Natural killer cell (primary cell): ENCODE measurements at regions of chr2 and their contacts with region 1.

Region 1: DNA sequence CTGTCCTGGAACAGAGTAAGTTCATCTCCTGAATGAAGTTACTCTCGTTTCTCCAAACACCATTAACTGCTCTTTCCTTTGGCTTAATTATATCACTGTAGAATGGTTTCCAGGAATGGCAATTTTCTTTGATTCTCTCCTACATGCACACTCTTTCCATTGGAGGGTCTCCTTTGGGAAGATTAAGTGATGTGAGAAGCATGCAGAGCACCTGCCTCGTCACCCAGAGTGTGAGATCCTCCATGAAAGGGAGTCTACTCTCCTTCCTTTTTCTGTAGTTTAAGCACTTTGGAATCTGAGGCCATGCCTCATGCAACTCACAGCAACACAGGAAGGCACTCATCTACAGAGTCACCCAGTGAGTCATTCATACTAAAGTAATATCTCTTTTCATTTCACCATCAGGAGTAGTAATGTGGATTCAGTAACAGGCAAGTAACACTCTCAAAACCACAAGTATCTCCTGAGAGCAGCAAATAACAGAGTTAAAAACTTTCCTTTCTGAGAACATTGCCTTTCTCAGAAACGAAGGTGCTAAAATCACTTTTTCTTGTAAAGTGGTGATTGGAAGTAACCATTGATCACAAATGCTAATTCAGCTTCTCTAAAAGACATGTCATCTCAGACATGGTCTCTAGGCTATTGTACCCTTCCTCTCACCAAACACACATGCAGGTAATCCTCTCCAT is 52.8 kb upstream of the IL1RL1 start:
- DNase-seq: peak in 1 of 2 donors; percentile 36
- ATAC-seq: peak; percentile 66 to 73 (median 70)
- H3K4me3 ChIP-seq: no peak overlapping the region
- H3K4me3 Mint-ChIP-seq: peak overlapping the region; percentile 78
- H3K27ac ChIP-seq: peak overlapping the region; percentile 31
- H3K27ac Mint-ChIP-seq: peak overlapping the region; percentile 84 to 92
- H3K4me1 ChIP-seq: peaks cover 53% of the 10 kb centered on the region
- H3K4me1 Mint-ChIP-seq: peaks cover 37 to 46% of the 10 kb centered on the region in 2 donors
- H3K27me3 ChIP-seq: no peaks in the 10 kb centered on the region
- H3K27me3 Mint-ChIP-seq: no peaks in the 10 kb centered on the region
- CTCF ChIP-seq: no peak

Region 2: GRCh38 chr2:102294802-102295489 is 36.4 kb after region 1 on chr2:
- intact Hi-C with region 1: loop called (anchors 5 kb)
- DNase-seq: no peak
- ATAC-seq: peak in 1 of 3 donors; percentile 18
- H3K4me3 ChIP-seq: no peak overlapping the region
- H3K4me3 Mint-ChIP-seq: no peak overlapping the region
- H3K27ac ChIP-seq: no peak overlapping the region
- H3K27ac Mint-ChIP-seq: peak overlapping the region in 1 of 2 donors; percentile 44
- H3K4me1 ChIP-seq: peaks cover 9% of the 10 kb centered on the region
- H3K4me1 Mint-ChIP-seq: peaks cover 23 to 25% of the 10 kb centered on the region in 2 donors
- H3K27me3 ChIP-seq: no peaks in the 10 kb centered on the region
- H3K27me3 Mint-ChIP-seq: peaks cover 0 to 3% of the 10 kb centered on the region in 2 donors
- CTCF ChIP-seq: no peak

Region 3: GRCh38 chr2:102366406-102367112 is 108.0 kb after region 1 on chr2:
- intact Hi-C with region 1: loop called (anchors 2 kb)
- DNase-seq: peak in 1 of 2 donors; percentile 60
- ATAC-seq: peak; percentile 25 to 53 (median 45)
- H3K4me3 ChIP-seq: peak overlapping the region; percentile 26
- H3K4me3 Mint-ChIP-seq: peak overlapping the region; percentile 88
- H3K27ac ChIP-seq: peak overlapping the region; percentile 80
- H3K27ac Mint-ChIP-seq: peak overlapping the region; percentile 90 to 95
- H3K4me1 ChIP-seq: peaks cover 35% of the 10 kb centered on the region
- H3K4me1 Mint-ChIP-seq: peaks cover 87% of the 10 kb centered on the region in 2 donors
- H3K27me3 ChIP-seq: no peaks in the 10 kb centered on the region
- H3K27me3 Mint-ChIP-seq: no peaks in the 10 kb centered on the region
- CTCF ChIP-seq: no peak

Region 4: DNA sequence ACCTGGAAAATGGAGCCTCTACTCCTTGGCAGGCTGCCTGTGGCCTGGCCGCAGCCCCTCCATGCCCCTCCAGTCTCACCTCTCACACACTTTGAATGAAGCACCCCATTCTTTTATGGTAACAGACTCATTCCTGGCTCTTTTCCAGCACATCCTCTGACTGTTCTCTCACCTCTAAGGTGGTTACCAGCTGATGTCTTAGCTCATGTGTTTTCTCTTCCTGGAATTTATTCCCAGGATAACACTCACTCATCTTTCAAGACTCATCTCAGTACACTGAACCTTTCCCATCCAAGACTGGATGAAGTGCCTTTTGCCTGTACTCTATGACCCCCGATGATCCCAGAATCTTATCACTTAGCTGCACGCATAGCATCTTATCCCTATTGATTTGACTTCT is 265.1 kb after region 1 on chr2:
- intact Hi-C with region 1: no loop called
- DNase-seq: no peak
- ATAC-seq: no peak
- H3K4me3 ChIP-seq: no peak overlapping the region
- H3K4me3 Mint-ChIP-seq: peak overlapping the region; percentile 49
- H3K27ac ChIP-seq: peak overlapping the region; percentile 54
- H3K27ac Mint-ChIP-seq: peak overlapping the region; percentile 72 to 85
- H3K4me1 ChIP-seq: peaks cover 43% of the 10 kb centered on the region
- H3K4me1 Mint-ChIP-seq: peaks cover 55 to 66% of the 10 kb centered on the region in 2 donors
- H3K27me3 ChIP-seq: no peaks in the 10 kb centered on the region
- H3K27me3 Mint-ChIP-seq: no peaks in the 10 kb centered on the region
- CTCF ChIP-seq: no peak

Region 5: GRCh38 chr2:102606363-102606762 is 347.8 kb after region 1 on chr2:
- intact Hi-C with region 1: loop called (anchors 5 kb)
- DNase-seq: no peak
- ATAC-seq: no peak
- H3K4me3 ChIP-seq: no peak overlapping the region
- H3K4me3 Mint-ChIP-seq: no peak overlapping the region
- H3K27ac ChIP-seq: no peak overlapping the region
- H3K27ac Mint-ChIP-seq: no peak overlapping the region
- H3K4me1 ChIP-seq: peaks cover under 1% of the 10 kb centered on the region
- H3K4me1 Mint-ChIP-seq: peaks cover 18 to 19% of the 10 kb centered on the region in 2 donors
- H3K27me3 ChIP-seq: no peaks in the 10 kb centered on the region
- H3K27me3 Mint-ChIP-seq: peaks cover 4 to 13% of the 10 kb centered on the region in 2 donors
- CTCF ChIP-seq: no peak

Region 6: GRCh38 chr2:102632380-102633175 is 374.0 kb after region 1 on chr2:
- intact Hi-C with region 1: no loop called
- DNase-seq: no peak
- ATAC-seq: no peak
- H3K4me3 ChIP-seq: no peak overlapping the region
- H3K4me3 Mint-ChIP-seq: no peak overlapping the region
- H3K27ac ChIP-seq: no peak overlapping the region
- H3K27ac Mint-ChIP-seq: no peak overlapping the region
- H3K4me1 ChIP-seq: no peaks in the 10 kb centered on the region
- H3K4me1 Mint-ChIP-seq: no peaks in the 10 kb centered on the region
- H3K27me3 ChIP-seq: no peaks in the 10 kb centered on the region
- H3K27me3 Mint-ChIP-seq: peaks cover 6 to 18% of the 10 kb centered on the region in 2 donors
- CTCF ChIP-seq: no peak